ENCODE measurements at regions of chr11 and their contacts with region 1.

Region 1: DNA sequence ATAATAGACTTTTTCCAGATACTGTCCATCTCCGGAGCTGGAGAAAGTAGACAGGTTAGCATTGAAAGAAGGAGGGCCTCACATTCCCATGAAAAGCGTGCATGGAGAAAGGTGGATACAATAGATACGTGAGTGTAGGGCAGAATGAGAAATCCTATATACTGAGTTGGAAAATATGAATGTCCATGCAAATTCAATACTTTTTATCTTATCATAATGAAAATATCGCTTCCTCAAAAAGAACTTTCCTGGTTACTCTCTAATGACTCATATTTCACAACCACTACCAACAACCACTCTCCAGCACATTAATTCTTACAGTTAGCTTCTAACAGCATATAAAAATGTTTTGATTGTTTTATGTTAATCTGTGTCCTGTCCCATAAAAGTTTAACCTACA is 22.0 kb upstream of the MS4A6A start:
- DNase-seq: no peak
- H3K4me3 Mint-ChIP-seq: no peak overlapping the region
- H3K27ac Mint-ChIP-seq: no peak overlapping the region
- H3K4me1 Mint-ChIP-seq: peaks cover 7% of the 10 kb centered on the region
- H3K27me3 Mint-ChIP-seq: peaks cover 16% of the 10 kb centered on the region

Region 2: GRCh38 chr11:60169264-60169915 is 35.5 kb before region 1 on chr11:
- CTCF ChIA-PET with region 1: no interaction called
- intact Hi-C with region 1: no loop called
- DNase-seq: peak; percentile 31
- H3K4me3 Mint-ChIP-seq: no peak overlapping the region
- H3K27ac Mint-ChIP-seq: no peak overlapping the region
- H3K4me1 Mint-ChIP-seq: no peaks in the 10 kb centered on the region
- H3K27me3 Mint-ChIP-seq: peaks cover 14% of the 10 kb centered on the region

Region 3: GRCh38 chr11:60310407-60311279 is 105.7 kb after region 1 on chr11:
- CTCF ChIA-PET with region 1: no interaction called
- intact Hi-C with region 1: loop called (anchors 5 kb)
- DNase-seq: no peak
- H3K4me3 Mint-ChIP-seq: no peak overlapping the region
- H3K27ac Mint-ChIP-seq: no peak overlapping the region
- H3K4me1 Mint-ChIP-seq: peaks cover 4% of the 10 kb centered on the region
- H3K27me3 Mint-ChIP-seq: peaks cover 9% of the 10 kb centered on the region